Activated CD8-positive, alpha-beta T cell treated with anti-CD3 and anti-CD28 coated beads for 36 hours (primary cell): ENCODE measurements at regions of chr3 and their contacts with region 1.

Region 1: DNA sequence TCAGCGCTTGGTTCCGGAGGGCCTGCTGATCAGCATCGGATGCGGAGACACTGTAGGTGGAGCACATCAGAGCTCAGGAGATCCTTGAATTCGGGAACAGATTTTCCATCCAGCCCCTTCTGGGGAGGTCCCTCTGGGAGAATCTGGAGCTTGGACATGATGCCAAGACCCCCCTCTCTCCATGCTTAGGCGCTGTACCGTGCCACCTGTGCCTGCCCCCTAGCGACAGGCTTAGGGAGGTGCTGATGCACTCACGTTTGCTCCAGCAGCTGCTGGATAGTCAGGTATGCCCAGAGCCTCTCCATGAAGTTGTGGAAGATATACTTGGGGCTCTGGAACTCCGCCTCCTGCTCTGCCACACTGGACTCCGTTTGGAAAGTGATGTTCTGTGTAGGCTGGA is 9.7 kb downstream of the ITIH4 start:
- DNase-seq: peak; percentile 39
- ATAC-seq: peak; percentile 84
- H3K4me3 Mint-ChIP-seq: no peak overlapping the region
- H3K27ac Mint-ChIP-seq: no peak overlapping the region
- H3K4me1 Mint-ChIP-seq: no peaks in the 10 kb centered on the region
- H3K27me3 Mint-ChIP-seq: no peaks in the 10 kb centered on the region
- CTCF ChIP-seq: peak; percentile 66

Region 2: DNA sequence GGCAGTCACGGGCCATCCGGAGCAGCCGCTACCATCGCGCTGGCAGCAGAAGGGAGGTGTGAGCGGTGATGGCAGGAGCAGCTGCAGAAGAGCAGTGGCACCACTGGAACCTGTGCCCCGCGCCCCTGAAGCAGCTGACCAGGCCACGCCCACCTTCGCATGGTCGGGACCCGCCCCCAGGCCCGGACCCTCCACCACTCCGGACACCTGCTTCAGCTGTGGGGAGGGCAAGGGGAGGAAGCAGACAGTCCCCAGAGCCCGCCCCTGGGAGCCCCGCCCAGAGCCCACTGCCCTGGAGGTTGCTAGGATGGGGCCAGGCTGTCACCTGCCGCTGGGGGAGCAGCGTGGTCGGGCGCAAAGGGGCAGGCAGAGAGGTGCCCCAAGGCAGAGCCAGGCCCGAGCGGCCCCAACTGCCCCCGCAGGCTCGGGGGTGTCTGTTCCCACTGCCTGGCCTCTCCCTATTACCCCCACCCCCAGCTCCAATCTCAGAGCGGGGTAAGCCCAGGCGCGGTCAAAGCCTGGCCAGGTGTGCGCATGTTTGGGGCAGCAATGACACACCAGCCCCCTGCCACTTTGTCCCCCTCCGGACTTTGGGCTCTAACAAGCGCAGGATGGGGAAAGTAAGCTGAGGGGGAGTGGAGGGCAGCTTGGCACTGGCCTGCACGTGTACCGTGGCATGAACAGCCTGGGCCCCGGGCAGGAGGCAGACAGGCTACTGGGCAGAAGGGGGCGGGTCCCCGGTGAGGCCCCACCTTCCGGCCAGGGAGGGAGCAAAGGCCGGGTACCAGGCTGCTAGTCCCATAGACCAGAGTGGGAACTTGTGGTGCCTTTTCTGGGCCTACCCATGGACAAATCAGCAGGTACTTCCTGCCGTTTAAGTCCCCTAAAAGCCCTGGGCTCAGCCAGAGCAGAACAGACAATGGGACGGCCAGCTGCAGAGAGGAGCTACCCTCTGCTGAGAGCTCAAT is 106.1 kb before region 1 on chr3:
- CTCF ChIA-PET with region 1: no interaction called
- POLR2A ChIA-PET with region 1: no interaction called
- intact Hi-C with region 1: no loop called
- DNase-seq: no peak
- ATAC-seq: no peak
- H3K4me3 Mint-ChIP-seq: no peak overlapping the region
- H3K27ac Mint-ChIP-seq: no peak overlapping the region
- H3K4me1 Mint-ChIP-seq: peaks cover 2% of the 10 kb centered on the region
- H3K27me3 Mint-ChIP-seq: no peaks in the 10 kb centered on the region
- CTCF ChIP-seq: no peak

Region 3: GRCh38 chr3:52730681-52731080 is 90.1 kb before region 1 on chr3:
- CTCF ChIA-PET with region 1: no interaction called
- POLR2A ChIA-PET with region 1: no interaction called
- intact Hi-C with region 1: no loop called
- DNase-seq: peak; percentile 14
- ATAC-seq: no peak
- H3K4me3 Mint-ChIP-seq: no peak overlapping the region
- H3K27ac Mint-ChIP-seq: no peak overlapping the region
- H3K4me1 Mint-ChIP-seq: peaks cover 7% of the 10 kb centered on the region
- H3K27me3 Mint-ChIP-seq: no peaks in the 10 kb centered on the region
- CTCF ChIP-seq: no peak

Region 4: DNA sequence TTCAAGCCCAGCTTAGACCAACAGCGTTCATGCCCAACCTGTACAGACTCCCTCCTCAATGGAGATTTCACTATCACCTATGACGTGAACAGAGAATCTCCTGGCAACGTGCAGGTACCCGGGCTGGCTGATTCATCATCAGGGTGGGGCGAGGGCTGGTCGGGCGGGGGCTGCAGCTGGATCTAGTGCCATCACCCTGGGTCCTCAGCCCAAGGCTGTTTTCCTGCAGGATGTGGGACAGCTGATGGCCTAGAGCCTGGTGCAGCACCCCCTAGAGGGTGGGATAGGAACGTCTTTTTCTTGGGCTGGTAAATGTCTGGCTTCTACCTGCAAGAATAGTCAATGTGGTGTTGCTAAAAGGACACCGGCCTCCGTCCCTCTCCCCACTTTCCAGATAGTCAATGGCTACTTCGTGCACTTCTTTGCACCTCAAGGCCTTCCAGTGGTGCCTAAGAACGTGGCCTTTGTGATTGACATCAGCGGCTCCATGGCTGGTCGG is 21.7 kb before region 1 on chr3:
- CTCF ChIA-PET with region 1: interaction called, 17 read pairs
- POLR2A ChIA-PET with region 1: no interaction called
- intact Hi-C with region 1: no loop called
- DNase-seq: peak; percentile 43
- ATAC-seq: peak; percentile 45
- H3K4me3 Mint-ChIP-seq: no peak overlapping the region
- H3K27ac Mint-ChIP-seq: no peak overlapping the region
- H3K4me1 Mint-ChIP-seq: no peaks in the 10 kb centered on the region
- H3K27me3 Mint-ChIP-seq: no peaks in the 10 kb centered on the region
- CTCF ChIP-seq: peak; percentile 67

Region 5: DNA sequence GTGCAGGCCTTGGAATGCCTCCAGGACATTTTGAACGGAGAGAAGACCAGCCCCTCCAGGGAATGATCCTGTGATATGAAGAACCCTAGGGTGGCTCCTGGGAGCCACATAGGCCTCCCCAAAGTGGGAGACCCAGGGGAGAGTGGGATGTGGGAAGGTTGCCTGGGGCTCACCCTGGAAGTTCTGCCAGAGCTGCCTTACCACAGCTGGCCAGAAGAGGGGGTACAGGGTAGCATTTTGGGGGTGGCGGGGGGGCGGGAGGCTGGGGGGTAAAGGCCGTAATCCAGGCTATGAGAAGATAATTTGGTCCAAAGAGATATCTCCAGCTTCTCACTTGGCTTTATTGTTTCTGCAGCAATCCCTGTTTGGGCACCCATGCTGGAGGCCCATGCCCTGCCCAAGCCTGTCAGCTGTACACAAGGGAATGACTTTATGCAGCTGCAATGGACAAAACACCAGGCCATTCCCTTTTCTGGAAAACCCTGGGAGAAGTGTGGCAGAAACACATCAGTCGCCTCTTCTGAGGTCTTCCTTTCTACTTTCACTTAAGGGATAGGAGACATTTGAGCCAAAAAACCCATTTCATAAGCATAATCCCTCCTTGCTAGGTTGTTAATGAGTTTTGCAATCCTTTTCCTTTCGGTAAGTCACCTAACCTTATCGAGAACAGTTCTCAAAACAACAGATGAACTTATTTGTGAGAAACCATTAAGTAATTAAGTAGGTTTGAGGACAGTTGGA is 25.1 kb after region 1 on chr3:
- CTCF ChIA-PET with region 1: interaction called, 11 read pairs
- POLR2A ChIA-PET with region 1: no interaction called
- intact Hi-C with region 1: no loop called
- DNase-seq: peak; percentile 39
- ATAC-seq: no peak
- H3K4me3 Mint-ChIP-seq: no peak overlapping the region
- H3K27ac Mint-ChIP-seq: no peak overlapping the region
- H3K4me1 Mint-ChIP-seq: no peaks in the 10 kb centered on the region
- H3K27me3 Mint-ChIP-seq: no peaks in the 10 kb centered on the region
- CTCF ChIP-seq: peak; percentile 54